ENCODE measurements at regions of chr17 and their contacts with region 1.

Region 1: DNA sequence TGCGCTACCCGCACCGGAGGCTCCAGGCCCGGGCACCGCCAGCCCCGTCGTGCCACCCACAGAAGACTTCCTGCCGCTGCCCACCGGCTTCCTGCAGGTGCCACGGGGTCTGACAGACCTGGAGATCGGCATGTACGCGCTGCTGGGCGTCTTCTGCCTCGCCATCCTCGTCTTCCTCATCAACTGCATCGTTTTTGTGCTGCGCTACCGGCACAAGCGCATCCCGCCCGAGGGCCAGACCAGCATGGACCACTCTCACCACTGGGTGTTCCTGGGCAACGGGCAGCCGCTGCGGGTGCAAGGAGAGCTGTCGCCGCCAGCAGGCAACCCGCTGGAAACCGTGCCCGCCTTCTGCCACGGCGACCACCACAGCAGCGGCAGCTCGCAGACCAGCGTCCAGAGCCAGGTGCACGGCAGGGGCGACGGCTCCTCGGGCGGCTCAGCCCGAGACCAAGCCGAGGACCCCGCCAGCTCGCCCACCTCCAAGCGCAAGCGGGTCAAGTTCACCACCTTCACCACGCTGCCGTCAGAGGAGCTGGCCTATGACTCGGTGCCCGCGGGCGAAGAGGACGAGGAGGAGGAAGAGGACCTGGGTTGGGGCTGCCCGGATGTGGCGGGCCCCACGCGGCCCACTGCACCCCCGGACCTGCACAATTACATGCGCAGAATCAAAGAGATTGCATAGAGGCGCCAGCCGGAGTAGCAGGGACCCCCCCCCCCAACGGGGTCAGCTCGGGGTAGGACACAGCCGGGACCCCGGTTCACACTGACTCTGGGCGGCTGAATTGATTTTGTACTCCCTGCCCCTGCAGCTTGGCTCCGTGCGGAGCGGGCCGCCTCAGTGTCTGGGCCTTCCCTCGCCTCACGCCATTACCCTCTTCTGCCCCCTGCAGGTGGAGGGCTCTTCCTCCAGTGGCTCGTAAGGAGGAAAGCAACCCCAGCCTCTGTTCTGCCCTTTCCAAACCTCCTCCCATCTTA is 58.5 kb downstream of the TMEM132E start:
- DNase-seq: peak; percentile 36 to 96 (median 74)

Region 2: DNA sequence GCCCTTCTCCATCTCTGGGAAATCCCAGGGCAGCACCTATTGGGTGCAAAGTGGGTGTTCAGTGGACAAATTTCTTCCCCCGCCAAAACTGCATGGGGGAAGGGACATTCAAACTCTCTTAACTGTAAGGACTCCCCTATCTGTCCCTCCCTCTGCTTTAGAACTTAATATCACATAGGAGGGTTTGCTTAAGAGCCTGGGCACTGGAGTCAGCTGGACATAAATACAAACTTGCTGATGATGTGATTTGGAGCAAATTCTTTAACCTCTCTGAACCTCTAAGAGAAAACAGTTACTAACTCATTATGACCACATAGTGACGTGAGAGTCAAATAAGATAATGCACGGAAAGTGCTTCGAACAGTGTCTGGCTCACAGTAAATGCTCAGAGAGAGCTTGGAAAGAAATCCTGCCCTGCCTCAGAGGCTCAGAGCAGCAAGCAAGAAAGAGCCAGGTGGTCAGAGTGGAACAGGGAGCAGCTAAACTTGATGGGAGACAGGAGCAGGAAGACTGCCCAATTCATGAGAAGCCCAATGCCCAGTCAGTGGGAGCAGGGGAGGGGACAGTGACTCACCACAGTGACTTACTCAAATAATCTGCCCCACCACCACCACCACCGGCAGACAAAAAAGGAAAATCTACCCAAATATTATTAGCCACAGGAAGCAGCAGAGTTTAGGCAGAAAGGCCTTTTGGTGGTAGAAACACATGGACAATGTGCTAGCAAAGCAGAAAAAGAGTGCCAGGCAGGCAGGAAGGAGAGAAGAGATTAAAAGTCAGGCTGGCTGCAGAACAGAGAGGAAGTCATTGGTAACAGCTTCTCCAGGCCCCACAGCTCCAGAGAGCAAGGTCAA is 250.9 kb before region 1 on chr17:
- intact Hi-C with region 1: no loop called
- DNase-seq: no peak

Region 3: DNA sequence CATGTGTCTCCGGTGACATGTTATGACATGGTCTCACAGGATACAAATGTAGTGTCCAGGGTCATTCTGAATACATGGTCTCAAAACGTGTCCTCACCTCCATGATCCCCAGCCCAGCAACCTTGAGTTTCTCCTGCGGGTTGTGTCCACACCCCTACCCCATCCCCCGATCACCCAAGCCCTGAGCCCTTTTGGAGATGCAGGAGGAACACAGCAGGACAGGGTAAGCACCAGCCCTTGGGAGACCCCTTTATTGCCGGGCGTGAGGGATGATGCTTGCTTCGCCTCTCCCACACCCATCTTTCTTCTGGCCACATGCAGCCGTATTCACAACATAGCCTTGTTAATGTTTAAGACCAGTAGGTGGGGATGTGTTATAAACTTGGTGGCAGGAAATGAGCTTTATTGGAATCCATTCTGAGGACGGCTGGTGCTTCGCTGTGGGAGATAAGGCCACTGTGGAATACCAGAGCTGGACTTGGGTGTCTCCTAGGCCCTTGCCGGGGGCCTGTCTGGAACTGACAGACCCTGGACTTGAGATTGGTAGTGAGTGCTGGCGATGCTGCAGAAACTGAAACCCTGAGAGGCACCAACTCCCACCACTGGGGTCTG is 52.9 kb before region 1 on chr17:
- intact Hi-C with region 1: loop called (anchors 5 kb)
- DNase-seq: peak in 2 of 10 donors; percentile 75

Measured in posterior cingulate gyrus (tissue), 11 donors.